ENCODE measurements at regions of chr9 and their contacts with region 1.

Region 1: DNA sequence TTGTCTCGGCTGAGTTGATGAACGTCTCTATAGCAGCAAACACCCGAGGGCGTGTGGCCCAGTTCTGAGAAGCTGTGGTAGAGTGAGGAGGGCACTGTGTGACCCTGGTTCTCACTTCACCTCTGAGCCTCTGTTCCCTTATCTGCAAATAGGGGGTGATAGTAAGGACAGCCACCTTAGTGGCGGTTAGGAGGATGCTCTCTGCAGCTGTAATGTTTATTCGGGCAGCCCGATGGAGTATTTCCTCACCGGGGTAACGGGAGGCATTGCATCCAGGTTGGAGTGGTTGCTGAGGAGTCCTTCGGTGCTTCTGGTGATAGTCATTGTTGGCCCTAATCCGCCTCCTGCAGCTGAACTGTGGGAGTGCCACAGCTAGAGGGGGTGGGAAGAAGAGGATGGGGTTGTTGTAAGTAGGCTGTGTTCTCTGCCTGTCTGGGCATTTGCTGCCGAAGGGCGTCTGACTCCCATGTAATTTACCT is 13.9 kb downstream of the PRRC2B start:
- DNase-seq: peak; percentile 61
- ATAC-seq: peak; percentile 45
- H3K4me3 Mint-ChIP-seq: peak overlapping the region; percentile 60
- H3K27ac Mint-ChIP-seq: peak overlapping the region; percentile 79
- H3K4me1 Mint-ChIP-seq: peaks cover 91% of the 10 kb centered on the region
- H3K27me3 Mint-ChIP-seq: no peaks in the 10 kb centered on the region
- CTCF ChIP-seq: peak; percentile 54

Region 2: GRCh38 chr9:130940693-130941576 is 466.8 kb before region 1 on chr9:
- CTCF ChIA-PET with region 1: no interaction called
- POLR2A ChIA-PET with region 1: no interaction called
- intact Hi-C with region 1: no loop called
- DNase-seq: peak; percentile 86
- ATAC-seq: peak; percentile 93
- H3K4me3 Mint-ChIP-seq: no peak overlapping the region
- H3K27ac Mint-ChIP-seq: no peak overlapping the region
- H3K4me1 Mint-ChIP-seq: peaks cover 7% of the 10 kb centered on the region
- H3K27me3 Mint-ChIP-seq: peaks cover 40% of the 10 kb centered on the region
- CTCF ChIP-seq: peak; percentile 87

Region 3: GRCh38 chr9:131366761-131367401 is 40.9 kb before region 1 on chr9:
- CTCF ChIA-PET with region 1: interaction called, 18 read pairs
- POLR2A ChIA-PET with region 1: no interaction called
- intact Hi-C with region 1: no loop called
- DNase-seq: peak; percentile 30
- ATAC-seq: peak; percentile 47
- H3K4me3 Mint-ChIP-seq: no peak overlapping the region
- H3K27ac Mint-ChIP-seq: no peak overlapping the region
- H3K4me1 Mint-ChIP-seq: peaks cover 5% of the 10 kb centered on the region
- H3K27me3 Mint-ChIP-seq: no peaks in the 10 kb centered on the region
- CTCF ChIP-seq: no peak

Region 4: DNA sequence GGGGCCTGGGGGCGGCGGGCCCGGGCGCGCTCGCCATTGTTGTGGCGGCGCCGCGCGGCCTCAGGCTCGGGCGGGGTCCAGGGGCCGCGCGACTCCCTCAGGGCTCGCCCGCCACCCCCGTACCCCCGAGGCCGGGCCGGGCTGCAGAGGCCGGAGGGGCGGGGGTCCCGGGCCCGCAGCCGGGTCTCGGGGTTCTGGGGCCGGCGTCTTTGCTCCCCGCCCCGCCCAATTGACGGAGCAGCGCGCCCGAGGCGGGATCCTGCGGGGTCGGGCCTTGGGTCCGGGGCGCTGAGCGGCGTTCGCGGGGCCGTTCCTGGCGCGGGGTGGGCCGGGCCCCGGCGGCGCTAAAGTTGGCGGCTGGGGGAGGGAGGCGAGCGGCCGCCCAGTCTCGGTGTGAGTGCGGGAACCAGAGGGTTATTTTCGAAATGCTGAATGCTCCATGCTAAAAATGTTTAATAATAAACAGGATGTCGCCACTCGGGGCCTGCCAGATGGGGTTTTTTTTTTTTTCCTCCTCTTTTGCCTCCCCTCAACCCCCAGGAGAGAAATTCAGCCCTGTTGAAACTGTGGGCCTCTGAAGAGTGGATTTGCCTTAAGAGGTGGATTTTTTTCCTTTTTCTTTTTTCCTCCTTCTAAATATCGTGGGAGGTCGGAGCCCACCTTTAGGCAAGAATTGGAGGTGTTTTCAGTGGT is 13.1 kb before region 1 on chr9:
- CTCF ChIA-PET with region 1: interaction called, 10 read pairs
- POLR2A ChIA-PET with region 1: interaction called, 59 read pairs
- intact Hi-C with region 1: no loop called
- DNase-seq: peak; percentile 62
- ATAC-seq: peak; percentile 18
- H3K4me3 Mint-ChIP-seq: peak overlapping the region; percentile 95
- H3K27ac Mint-ChIP-seq: peak overlapping the region; percentile 95
- H3K4me1 Mint-ChIP-seq: peaks cover 45% of the 10 kb centered on the region
- H3K27me3 Mint-ChIP-seq: no peaks in the 10 kb centered on the region
- CTCF ChIP-seq: no peak

Region 5: DNA sequence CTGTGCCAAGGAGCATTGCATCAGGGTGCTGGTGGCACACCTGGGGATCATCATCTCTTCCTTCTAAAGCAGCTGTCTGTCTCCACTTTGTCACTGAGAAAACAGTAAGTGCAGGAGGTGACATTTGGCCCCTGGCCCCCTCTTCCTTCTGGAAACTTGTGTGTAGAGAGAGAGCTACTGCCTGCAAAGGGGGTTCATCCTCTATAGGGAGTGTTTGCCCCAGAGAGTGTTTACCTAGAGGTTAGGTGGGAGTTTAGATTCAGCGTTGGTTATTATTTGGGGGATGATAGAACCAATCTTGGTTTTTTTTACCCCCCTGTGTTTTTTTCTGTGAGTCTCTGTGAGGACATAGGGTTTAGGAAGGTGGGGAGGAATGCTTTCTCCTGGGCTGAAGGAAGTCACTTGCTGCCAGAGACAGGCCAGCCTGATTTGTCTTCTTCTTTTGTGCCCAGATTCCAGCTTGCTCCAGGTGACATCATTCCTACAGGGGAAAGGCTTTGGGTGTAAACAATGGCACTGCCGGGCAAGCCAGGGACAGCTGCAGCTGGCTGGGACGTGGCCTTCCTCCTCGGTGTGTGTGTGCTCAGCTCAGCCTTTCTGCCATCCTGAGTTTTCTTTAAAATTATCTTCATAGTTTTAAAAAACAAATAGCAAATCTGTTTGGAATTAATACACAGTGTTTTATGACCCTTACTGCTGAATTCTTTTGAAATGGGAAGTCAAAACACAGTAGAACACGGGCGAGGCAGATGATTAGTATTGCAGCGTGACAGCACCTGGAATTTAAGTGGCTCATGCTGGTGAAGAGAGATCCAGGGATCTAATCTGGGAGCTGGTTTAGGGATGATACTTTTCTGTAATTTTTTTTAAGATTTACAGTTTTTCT is 10.6 kb after region 1 on chr9:
- CTCF ChIA-PET with region 1: interaction called, 11 read pairs
- POLR2A ChIA-PET with region 1: interaction called, 34 read pairs
- intact Hi-C with region 1: no loop called
- DNase-seq: no peak
- ATAC-seq: no peak
- H3K4me3 Mint-ChIP-seq: peak overlapping the region; percentile 51
- H3K27ac Mint-ChIP-seq: peak overlapping the region; percentile 90
- H3K4me1 Mint-ChIP-seq: peaks cover 86% of the 10 kb centered on the region
- H3K27me3 Mint-ChIP-seq: no peaks in the 10 kb centered on the region
- CTCF ChIP-seq: no peak

Region 6: DNA sequence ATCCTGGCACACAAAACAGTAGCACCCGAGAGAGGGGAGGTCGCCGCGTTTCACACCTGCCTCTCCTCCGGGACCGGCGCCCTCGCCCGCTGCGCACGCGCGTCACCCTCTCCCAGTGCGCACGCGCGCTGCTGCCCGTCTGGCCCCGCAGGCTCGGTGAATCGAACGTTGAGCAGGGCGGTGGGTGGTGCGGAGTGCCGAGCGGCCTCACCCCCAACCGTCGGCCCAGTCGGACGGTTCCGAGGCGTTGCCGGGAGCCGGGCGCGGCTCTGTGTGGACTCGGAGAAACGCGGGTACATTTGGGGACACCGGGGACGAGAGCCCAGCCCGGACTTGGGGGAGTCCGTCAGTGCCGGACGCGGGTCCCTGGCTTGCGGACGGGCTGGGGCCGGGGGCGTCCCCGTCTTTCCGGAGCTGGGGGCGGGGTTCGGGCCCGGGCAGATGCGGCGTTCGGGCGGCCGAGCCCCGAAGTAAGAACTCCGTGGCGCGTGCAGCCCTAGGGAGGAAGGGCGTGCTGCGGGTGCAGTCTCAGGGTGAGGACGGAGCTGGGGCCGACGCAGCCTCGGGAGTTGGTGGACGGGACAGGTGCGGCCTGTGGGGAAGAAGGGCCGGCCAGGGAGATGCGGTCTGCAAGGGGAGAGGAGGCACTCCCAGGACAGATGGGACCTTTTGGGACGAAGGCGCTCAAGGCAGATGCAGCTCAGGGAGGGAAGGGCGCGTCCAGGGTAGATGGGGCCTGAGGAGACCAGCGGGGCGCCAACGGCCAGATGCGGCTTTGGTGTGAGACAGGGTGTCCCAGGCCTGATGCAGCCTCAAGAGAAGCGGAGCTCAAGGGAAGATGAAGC is 95.2 kb after region 1 on chr9 and contains the start of gene POMT1:
- CTCF ChIA-PET with region 1: no interaction called
- POLR2A ChIA-PET with region 1: interaction called, 6 read pairs
- intact Hi-C with region 1: loop called (anchors 5 kb)
- DNase-seq: peak; percentile 89
- ATAC-seq: peak; percentile 56
- H3K4me3 Mint-ChIP-seq: peak within 1 kb of the TSS; percentile 99
- H3K27ac Mint-ChIP-seq: peak within 1 kb of the TSS; percentile 91
- H3K4me1 Mint-ChIP-seq: peaks cover 57% of the 10 kb centered on the region
- H3K27me3 Mint-ChIP-seq: no peaks in the 10 kb centered on the region
- CTCF ChIP-seq: no peak
- total RNA-seq, gene POMT1: 30.2 to 35.9 TPM

Measured in activated CD8-positive, alpha-beta T cell treated with anti-CD3 and anti-CD28 coated beads for 36 hours (primary cell).